ENCODE measurements at regions of chr14 and their contacts with region 1.

Region 1: GRCh38 chr14:69242311-69243224 is 17.4 kb upstream of the GALNT16 start:
- DNase-seq: peak in 1 of 2 donors; percentile 72
- ATAC-seq: peak; percentile 48 to 77 (median 64)
- H3K4me3 ChIP-seq: no peak overlapping the region
- H3K27ac ChIP-seq: peak overlapping the region in 3 of 10 donors; percentile 9 to 45 (median 17)
- H3K4me1 ChIP-seq: peaks cover 0 to 31% (median 14%) of the 10 kb centered on the region in 9 donors
- H3K27me3 ChIP-seq: no peaks in the 10 kb centered on the region
- CTCF ChIP-seq: peak; percentile 62 to 86 (median 76)

Region 2: GRCh38 chr14:69005432-69006147 is 237.0 kb before region 1 on chr14:
- intact Hi-C with region 1: no loop called
- DNase-seq: peak; percentile 29 to 52
- ATAC-seq: peak; percentile 8 to 88 (median 65)
- H3K4me3 ChIP-seq: no peak overlapping the region
- H3K27ac ChIP-seq: peak overlapping the region in 2 of 10 donors; percentile 1 to 59
- H3K4me1 ChIP-seq: peaks cover 0 to 25% (median 0%) of the 10 kb centered on the region in 9 donors
- H3K27me3 ChIP-seq: no peaks in the 10 kb centered on the region
- CTCF ChIP-seq: no peak

Region 3: GRCh38 chr14:69129264-69129880 is 113.2 kb before region 1 on chr14:
- intact Hi-C with region 1: loop called in 2 of 10 experiments (anchors 10 kb)
- DNase-seq: peak; percentile 43 to 76
- ATAC-seq: peak; percentile 75 to 87 (median 82)
- H3K4me3 ChIP-seq: no peak overlapping the region
- H3K27ac ChIP-seq: peak overlapping the region in 5 of 10 donors; percentile 4 to 39 (median 29)
- H3K4me1 ChIP-seq: peaks cover 15 to 81% (median 69%) of the 10 kb centered on the region in 9 donors
- H3K27me3 ChIP-seq: no peaks in the 10 kb centered on the region
- CTCF ChIP-seq: peak; percentile 85 to 97 (median 94)

Region 4: DNA sequence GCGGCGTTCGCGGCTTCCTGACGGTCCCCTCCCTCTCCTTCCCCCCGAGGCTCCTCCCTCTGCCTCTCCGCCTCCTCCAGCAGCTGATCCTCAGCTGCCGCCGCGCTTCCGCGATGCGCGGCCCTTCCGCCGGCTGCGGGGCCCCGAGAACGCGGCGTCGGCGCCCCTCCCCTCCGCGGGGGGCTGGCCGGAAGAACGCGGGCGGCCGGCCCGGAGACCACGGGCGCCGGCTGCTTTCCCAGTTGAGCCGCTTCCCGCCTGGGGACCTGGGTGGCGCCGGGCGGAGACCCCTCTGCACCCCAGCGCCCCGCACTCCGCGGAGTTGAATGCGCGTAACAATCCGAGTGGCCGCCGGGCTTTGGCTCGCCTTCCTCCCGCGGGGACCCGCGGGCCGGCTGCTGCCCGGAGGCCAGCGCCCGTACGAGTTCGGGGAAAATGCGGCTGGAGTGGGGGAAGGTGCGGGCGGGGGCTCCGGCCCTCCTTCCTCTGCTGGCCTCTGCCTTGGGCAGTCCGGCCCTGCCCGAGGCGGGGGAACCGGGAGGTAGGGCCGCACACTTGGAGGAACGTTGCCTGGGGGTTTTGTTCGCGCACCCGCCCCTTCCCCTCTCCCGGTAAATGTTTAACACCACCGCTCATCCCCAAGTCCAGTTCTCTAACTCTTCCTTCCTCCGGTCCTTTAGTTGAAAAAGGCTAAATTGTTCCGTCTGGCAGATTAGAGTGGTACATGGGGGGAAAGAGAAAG is 89.3 kb before region 1 on chr14:
- intact Hi-C with region 1: loop called in 1 of 10 experiments (anchors 5 kb)
- DNase-seq: peak; percentile 93 to 94
- ATAC-seq: peak; percentile 92 to 95 (median 93)
- H3K4me3 ChIP-seq: peak overlapping the region; percentile 79 to 98 (median 90)
- H3K27ac ChIP-seq: peak overlapping the region; percentile 76 to 98 (median 94)
- H3K4me1 ChIP-seq: peaks cover 3 to 44% (median 33%) of the 10 kb centered on the region in 9 donors
- H3K27me3 ChIP-seq: no peaks in the 10 kb centered on the region
- CTCF ChIP-seq: peak in 1 of 9 donors; percentile 3

Region 5: DNA sequence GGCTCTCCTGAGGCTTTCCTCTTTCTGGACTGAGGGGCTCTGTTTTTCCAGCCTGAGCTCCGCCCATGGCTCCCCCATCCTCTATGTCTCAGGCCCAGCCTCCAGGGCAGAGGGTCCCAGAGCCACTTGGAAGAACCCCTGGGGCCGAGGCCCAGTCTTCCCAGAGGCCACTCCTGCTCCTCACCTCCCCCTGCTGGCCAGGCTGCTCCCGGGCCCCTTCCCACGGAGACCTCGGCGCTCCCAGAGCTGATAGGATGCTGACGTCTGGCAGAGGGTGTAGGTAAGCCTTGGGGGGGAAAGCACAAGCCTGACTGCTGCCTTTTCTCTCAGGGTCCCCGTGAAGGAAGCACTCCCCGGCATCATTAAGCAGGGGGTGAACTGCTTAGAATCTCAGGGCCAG is 104.1 kb after region 1 on chr14:
- intact Hi-C with region 1: loop called in 4 of 10 experiments (anchors 5 kb)
- DNase-seq: peak; percentile 24 to 57
- ATAC-seq: peak in 3 of 8 donors; percentile 32 to 63 (median 38)
- H3K4me3 ChIP-seq: no peak overlapping the region
- H3K27ac ChIP-seq: no peak overlapping the region
- H3K4me1 ChIP-seq: peaks cover 0 to 12% (median 8%) of the 10 kb centered on the region in 9 donors
- H3K27me3 ChIP-seq: no peaks in the 10 kb centered on the region
- CTCF ChIP-seq: peak in 7 of 9 donors; percentile 50 to 66 (median 53)

Region 6: DNA sequence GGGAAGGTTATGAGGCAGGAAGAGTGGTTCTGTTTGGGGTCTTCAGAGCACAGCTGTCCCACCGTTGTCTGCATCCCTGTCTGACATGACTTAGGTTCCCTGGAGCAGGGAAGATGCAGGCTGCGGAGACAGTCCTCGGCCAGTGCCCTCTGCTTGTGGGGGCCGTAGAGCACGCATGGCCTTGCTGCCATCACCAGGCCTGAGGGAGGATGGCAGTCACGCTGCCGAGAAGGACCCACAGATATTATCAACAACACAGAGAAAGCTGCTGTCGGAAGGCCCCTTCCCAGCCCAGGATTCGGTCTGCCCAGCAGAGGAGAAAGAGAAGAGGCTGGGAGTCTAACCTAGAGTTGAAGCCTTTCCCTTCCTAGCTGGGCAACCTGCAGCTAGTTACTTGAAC is 120.5 kb after region 1 on chr14:
- intact Hi-C with region 1: loop called in 9 of 10 experiments (anchors 1 to 5 kb)
- DNase-seq: peak; percentile 25 to 52
- ATAC-seq: peak; percentile 72 to 89 (median 85)
- H3K4me3 ChIP-seq: no peak overlapping the region
- H3K27ac ChIP-seq: no peak overlapping the region
- H3K4me1 ChIP-seq: peaks cover 0 to 8% (median 0%) of the 10 kb centered on the region in 9 donors
- H3K27me3 ChIP-seq: no peaks in the 10 kb centered on the region
- CTCF ChIP-seq: peak; percentile 24 to 72 (median 59)

Region 7: DNA sequence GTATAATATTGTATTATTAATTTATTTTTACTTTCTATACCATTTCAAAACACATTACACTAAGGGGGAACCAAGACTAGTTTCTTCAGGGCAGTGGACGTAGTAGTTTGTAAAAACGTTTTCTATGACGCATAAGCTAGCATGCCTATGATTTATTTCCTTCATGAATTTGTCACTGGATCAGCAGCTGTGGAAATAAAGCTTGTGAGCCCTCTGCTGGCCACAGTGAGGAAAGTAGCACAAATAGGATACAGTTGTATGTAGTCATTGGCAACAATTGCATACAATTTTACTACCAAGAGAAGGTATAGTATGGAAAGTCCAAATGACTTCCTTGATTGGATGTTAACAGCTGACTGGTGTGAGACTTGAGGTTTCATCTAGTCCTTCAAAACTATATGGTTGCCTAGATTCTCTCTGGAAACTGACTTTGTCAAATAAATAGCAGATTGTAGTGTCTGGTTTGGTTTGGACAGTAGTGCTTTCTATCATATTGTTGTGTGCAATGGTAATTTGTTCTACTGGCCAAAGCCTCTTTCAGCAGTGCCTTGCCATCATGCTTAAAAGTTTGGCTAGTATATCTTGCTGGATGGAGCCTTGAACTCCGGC is 217.6 kb after region 1 on chr14:
- intact Hi-C with region 1: loop called (anchors 1 to 10 kb)
- DNase-seq: peak in 1 of 2 donors; percentile 72
- ATAC-seq: peak; percentile 73 to 92 (median 85)
- H3K4me3 ChIP-seq: no peak overlapping the region
- H3K27ac ChIP-seq: no peak overlapping the region
- H3K4me1 ChIP-seq: peaks cover 0 to 8% (median 0%) of the 10 kb centered on the region in 9 donors
- H3K27me3 ChIP-seq: no peaks in the 10 kb centered on the region
- CTCF ChIP-seq: peak in 8 of 9 donors; percentile 63 to 83 (median 79)

Region 8: DNA sequence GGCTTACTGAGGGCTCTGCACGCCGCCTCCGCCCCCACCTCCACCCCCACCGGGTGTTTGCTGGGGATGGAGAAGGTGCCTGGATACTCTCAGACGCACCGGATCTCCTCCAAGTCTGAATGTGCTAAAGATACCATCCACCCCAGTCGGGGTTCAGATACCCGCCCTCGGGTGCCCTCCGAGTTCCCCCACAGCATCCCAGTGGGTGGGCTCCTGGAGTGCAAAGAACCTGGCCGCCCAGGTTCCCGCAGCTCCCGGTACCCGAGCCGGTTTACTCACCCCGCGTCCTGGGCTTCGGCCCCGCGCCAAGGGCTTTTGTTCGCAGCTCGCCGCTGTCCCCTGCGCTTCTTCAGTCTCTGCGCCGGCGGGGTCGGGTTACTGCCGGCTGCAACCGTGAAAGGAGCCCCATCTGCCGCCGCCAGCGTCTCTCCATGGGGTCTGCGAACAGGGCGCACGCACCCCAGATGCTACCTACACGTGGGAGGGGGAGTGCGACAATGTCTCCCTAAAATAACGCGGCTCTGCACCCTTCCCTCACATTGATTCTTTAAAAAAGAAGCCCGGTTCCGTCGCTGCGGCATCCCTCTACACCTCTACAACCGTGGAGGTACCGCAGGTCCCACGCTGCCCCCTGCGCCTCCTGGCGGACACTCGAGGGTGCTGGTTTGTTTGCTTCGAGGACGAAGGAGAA is 331.8 kb after region 1 on chr14 and contains the start of gene CCDC177:
- intact Hi-C with region 1: loop called in 3 of 10 experiments (anchors 5 kb)
- DNase-seq: peak in 1 of 2 donors; percentile 53
- ATAC-seq: peak in 5 of 8 donors; percentile 55 to 77 (median 62)
- H3K4me3 ChIP-seq: peak within 1 kb of the TSS in 8 of 10 donors; percentile 6 to 61 (median 33)
- H3K27ac ChIP-seq: no peak within 1 kb of the TSS
- H3K4me1 ChIP-seq: peaks cover 12 to 38% (median 33%) of the 10 kb centered on the region in 9 donors
- H3K27me3 ChIP-seq: peaks cover 33 to 97% (median 85%) of the 10 kb centered on the region in 7 donors
- CTCF ChIP-seq: peak; percentile 46 to 87 (median 79)
- total RNA-seq, gene CCDC177: not detected

Measured in heart right ventricle (tissue), 16 donors.